ENCODE measurements at regions of chr12 and their contacts with region 1.

Region 1: DNA sequence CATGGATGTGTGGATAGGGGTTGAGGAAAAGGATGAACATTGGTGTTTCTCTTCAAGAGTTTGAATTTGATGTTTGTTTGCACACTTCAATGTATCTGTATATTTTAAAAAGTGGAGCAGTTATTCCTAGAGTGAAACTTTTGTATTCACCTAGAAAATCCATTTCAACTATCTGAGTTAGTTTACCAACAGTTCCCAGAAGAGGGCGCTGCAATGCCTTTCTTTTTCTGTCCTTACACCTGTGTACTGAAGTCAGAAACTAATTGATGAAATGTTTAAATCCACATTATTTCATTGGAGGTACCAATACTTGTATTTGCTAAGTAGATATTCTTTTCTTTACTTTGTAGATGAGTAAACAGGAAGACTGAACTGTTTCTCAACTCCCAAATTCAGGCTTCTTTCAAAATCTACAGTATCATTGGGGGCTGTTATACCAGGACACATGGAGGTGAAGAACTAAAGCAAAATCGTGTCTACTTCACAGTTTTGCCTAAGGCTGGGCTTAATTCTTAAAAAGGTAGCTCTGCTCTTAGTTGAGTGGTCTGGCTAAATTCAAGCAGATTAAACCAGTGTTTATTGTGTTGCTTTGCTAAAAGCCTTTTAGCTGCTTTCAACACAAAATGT is 26.6 kb upstream of the KLRB1 start:
- DNase-seq: peak; percentile 79
- H3K4me3 Mint-ChIP-seq: no peak overlapping the region
- H3K27ac Mint-ChIP-seq: no peak overlapping the region
- H3K4me1 Mint-ChIP-seq: no peaks in the 10 kb centered on the region
- H3K27me3 Mint-ChIP-seq: no peaks in the 10 kb centered on the region
- CTCF ChIP-seq: peak; percentile 73

Region 2: GRCh38 chr12:9256341-9256740 is 377.9 kb before region 1 on chr12:
- CTCF ChIA-PET with region 1: no interaction called
- POLR2A ChIA-PET with region 1: no interaction called
- intact Hi-C with region 1: no loop called
- DNase-seq: no peak
- H3K4me3 Mint-ChIP-seq: no peak overlapping the region
- H3K27ac Mint-ChIP-seq: no peak overlapping the region
- H3K4me1 Mint-ChIP-seq: no peaks in the 10 kb centered on the region
- H3K27me3 Mint-ChIP-seq: no peaks in the 10 kb centered on the region
- CTCF ChIP-seq: no peak

Region 3: GRCh38 chr12:9647825-9648700 is 13.8 kb after region 1 on chr12:
- CTCF ChIA-PET with region 1: interaction called, 12 read pairs
- POLR2A ChIA-PET with region 1: interaction called, 18 read pairs
- intact Hi-C with region 1: no loop called
- DNase-seq: peak; percentile 74
- H3K4me3 Mint-ChIP-seq: peak overlapping the region; percentile 77
- H3K27ac Mint-ChIP-seq: peak overlapping the region; percentile 66
- H3K4me1 Mint-ChIP-seq: peaks cover 29% of the 10 kb centered on the region
- H3K27me3 Mint-ChIP-seq: no peaks in the 10 kb centered on the region
- CTCF ChIP-seq: no peak

Region 4: DNA sequence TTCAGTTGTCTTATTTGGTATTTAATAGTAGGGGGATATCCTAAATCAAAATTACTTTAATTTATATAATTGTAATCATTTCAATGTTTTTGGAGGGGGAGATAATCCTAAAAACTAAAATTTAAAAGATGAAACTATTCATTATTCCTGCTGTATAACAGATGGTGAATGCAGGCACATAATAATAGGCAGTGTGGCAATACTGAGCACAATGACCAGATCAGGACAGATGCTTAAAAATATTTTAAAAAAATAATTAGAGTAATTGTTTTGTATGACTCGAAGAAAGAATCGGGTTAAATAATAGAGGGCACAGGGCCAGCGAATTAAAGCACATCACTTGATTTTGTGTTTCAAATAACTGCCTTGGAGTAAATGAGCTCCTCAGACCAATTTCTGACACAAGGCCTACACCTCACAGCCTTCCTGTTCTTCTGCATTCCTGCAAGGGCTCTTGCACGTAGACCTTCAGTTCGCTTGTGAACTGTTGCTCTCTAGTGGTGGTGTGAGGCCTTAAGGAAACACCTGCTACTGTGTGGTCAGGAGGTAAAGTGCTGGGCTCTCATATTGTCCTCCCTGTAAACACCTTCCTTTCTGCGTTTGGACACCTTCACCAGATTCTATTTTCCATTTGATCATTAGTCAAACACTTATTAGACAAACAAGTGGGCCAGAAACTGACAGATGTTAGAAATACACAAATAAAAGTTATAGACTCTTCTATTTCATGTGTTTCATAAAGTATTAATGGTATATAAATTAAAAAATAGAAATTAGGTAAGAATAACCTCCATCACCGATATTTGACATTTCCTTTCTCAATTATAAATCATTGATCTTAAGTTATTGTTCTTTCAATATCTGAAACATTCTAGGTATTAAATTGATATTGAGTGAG is 163.7 kb after region 1 on chr12:
- CTCF ChIA-PET with region 1: no interaction called
- POLR2A ChIA-PET with region 1: no interaction called
- intact Hi-C with region 1: loop called (anchors 1 kb)
- DNase-seq: peak; percentile 74
- H3K4me3 Mint-ChIP-seq: no peak overlapping the region
- H3K27ac Mint-ChIP-seq: no peak overlapping the region
- H3K4me1 Mint-ChIP-seq: no peaks in the 10 kb centered on the region
- H3K27me3 Mint-ChIP-seq: no peaks in the 10 kb centered on the region
- CTCF ChIP-seq: peak; percentile 47